ENCODE measurements at regions of chr2 and their contacts with region 1.

Region 1: GRCh38 chr2:204260162-204260877 is 285.0 kb upstream of the PARD3B start:
- DNase-seq: no peak
- H3K4me3 ChIP-seq: no peak overlapping the region
- H3K27ac ChIP-seq: no peak overlapping the region
- H3K4me1 ChIP-seq: no peaks in the 10 kb centered on the region
- H3K27me3 ChIP-seq: no peaks in the 10 kb centered on the region
- CTCF ChIP-seq: peak; percentile 70 to 80 (median 74)
- POLR2A ChIP-seq: no peak

Region 2: GRCh38 chr2:204293884-204294747 is 33.8 kb after region 1 on chr2:
- intact Hi-C with region 1: no loop called
- DNase-seq: no peak
- H3K4me3 ChIP-seq: no peak overlapping the region
- H3K27ac ChIP-seq: no peak overlapping the region
- H3K4me1 ChIP-seq: no peaks in the 10 kb centered on the region
- H3K27me3 ChIP-seq: no peaks in the 10 kb centered on the region
- CTCF ChIP-seq: no peak
- POLR2A ChIP-seq: no peak

Region 3: GRCh38 chr2:204315236-204315662 is 54.9 kb after region 1 on chr2:
- intact Hi-C with region 1: no loop called
- DNase-seq: no peak
- H3K4me3 ChIP-seq: peak overlapping the region in 1 of 2 donors; percentile 3
- H3K27ac ChIP-seq: no peak overlapping the region
- H3K4me1 ChIP-seq: peaks cover 10% of the 10 kb centered on the region
- H3K27me3 ChIP-seq: no peaks in the 10 kb centered on the region
- CTCF ChIP-seq: no peak
- POLR2A ChIP-seq: no peak

Region 4: DNA sequence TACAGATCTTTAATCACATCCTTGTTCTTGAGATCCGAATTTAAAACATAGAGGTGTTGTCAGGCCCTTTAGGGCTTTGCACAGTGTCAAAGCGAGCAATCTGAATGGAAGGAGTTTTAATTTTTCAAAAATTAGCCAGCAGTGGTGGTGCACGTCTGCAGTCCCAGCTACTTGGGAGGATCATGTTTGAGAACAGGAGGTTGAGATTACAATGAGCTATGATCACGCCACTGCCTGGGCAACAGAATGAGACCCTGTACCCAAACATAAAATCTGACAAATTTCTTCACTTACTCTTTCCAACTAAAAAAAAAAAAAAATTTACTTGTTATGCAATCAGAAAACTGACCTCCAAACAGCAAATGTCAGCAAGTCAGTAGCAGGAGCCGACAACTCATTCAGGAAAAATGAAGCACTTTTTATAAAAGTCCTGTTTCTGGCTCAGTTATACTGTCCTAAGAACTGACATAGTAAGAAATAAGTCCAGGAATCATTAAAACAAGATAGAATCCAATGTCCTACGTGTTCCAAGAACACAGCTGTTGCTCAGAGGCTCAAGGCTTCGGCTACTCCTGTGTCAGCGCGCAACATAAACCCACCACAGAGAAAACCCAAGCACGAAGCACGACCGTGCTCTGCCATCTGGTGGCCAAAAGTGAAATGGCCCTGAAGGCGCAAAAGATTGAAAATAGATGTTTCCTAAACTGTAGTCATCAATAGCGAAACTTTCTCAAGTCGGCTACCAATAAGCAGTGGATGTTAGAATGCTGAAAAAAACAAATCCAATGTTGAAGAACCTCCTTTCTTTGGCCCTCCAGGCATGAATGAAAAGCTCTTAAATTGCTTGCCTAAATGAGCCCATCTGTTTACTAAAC is 1687.5 kb after region 1 on chr2:
- intact Hi-C with region 1: loop called (anchors 10 kb)
- DNase-seq: no peak
- H3K4me3 ChIP-seq: no peak overlapping the region
- H3K27ac ChIP-seq: peak overlapping the region; percentile 41
- H3K4me1 ChIP-seq: peaks cover 8% of the 10 kb centered on the region
- H3K27me3 ChIP-seq: no peaks in the 10 kb centered on the region
- CTCF ChIP-seq: peak; percentile 68 to 97 (median 86)
- POLR2A ChIP-seq: no peak